ENCODE measurements at regions of chr1 and their contacts with region 1.

Region 1: GRCh38 chr1:93680757-93681550 is 683 bp downstream of the BCAR3 start:
- DNase-seq: peak; percentile 62
- ATAC-seq: peak; percentile 72
- H3K4me3 Mint-ChIP-seq: peak overlapping the region; percentile 99
- H3K27ac Mint-ChIP-seq: peak overlapping the region; percentile 94
- H3K4me1 Mint-ChIP-seq: peaks cover 76% of the 10 kb centered on the region
- H3K27me3 Mint-ChIP-seq: no peaks in the 10 kb centered on the region
- CTCF ChIP-seq: no peak

Region 2: GRCh38 chr1:93215322-93215721 is 465.6 kb before region 1 on chr1:
- CTCF ChIA-PET with region 1: no interaction called
- POLR2A ChIA-PET with region 1: no interaction called
- intact Hi-C with region 1: no loop called
- DNase-seq: no peak
- ATAC-seq: no peak
- H3K4me3 Mint-ChIP-seq: no peak overlapping the region
- H3K27ac Mint-ChIP-seq: no peak overlapping the region
- H3K4me1 Mint-ChIP-seq: peaks cover 15% of the 10 kb centered on the region
- H3K27me3 Mint-ChIP-seq: no peaks in the 10 kb centered on the region
- CTCF ChIP-seq: no peak

Region 3: DNA sequence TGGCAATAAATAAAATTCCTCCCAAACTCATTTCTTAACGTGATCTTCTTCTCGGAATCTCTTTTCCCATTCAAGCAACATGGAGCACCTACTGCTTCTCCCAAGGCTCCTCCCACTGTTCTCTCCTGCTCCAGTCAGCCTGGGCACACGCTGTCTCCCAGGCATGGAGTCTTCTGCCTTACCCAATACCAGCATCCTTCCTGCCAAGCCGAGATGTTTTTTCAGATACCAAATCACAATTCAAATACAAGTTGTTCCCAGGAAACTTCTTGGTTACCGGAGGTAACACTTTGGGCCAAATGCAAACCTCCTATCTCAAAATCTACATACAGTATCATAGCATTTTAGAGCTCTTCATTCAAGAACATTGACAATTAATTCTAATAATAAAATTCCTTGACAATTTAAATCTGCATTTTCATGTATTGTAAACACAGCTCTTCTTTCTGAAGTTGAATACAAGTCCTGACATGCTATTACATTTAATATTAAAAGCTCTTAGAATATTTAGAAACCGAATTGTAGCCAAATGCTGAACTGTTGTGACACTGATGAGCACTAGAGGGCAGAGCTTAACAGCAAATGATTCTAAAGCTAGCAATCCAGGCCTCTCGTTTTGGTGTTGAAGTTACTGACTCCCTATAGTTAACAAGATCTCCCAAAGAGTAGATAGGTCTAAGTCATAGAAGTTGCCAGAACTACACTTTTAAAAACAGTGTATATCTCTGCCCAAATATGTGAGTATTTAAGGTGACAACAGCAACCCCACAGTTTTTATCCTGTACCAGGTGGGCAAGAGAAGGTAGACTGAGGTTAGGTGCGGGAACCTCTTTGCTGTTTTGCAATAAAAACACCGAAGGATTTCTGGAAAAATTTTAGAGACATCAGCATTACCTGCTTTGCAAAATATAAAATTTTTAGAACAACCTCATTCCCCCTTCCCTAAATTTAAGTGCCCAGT is 51.6 kb before region 1 on chr1:
- CTCF ChIA-PET with region 1: interaction called, 49 read pairs
- POLR2A ChIA-PET with region 1: interaction called, 3 read pairs
- intact Hi-C with region 1: loop called (anchors 1 kb)
- DNase-seq: no peak
- ATAC-seq: peak; percentile 83
- H3K4me3 Mint-ChIP-seq: no peak overlapping the region
- H3K27ac Mint-ChIP-seq: no peak overlapping the region
- H3K4me1 Mint-ChIP-seq: peaks cover 9% of the 10 kb centered on the region
- H3K27me3 Mint-ChIP-seq: no peaks in the 10 kb centered on the region
- CTCF ChIP-seq: peak; percentile 74

Region 4: GRCh38 chr1:93692983-93693591 is 12.1 kb after region 1 on chr1:
- CTCF ChIA-PET with region 1: interaction called, 14 read pairs
- POLR2A ChIA-PET with region 1: interaction called, 25 read pairs
- intact Hi-C with region 1: loop called (anchors 1 kb)
- DNase-seq: no peak
- ATAC-seq: peak; percentile 80
- H3K4me3 Mint-ChIP-seq: peak overlapping the region; percentile 64
- H3K27ac Mint-ChIP-seq: no peak overlapping the region
- H3K4me1 Mint-ChIP-seq: peaks cover 16% of the 10 kb centered on the region
- H3K27me3 Mint-ChIP-seq: no peaks in the 10 kb centered on the region
- CTCF ChIP-seq: no peak

Region 5: GRCh38 chr1:93708734-93709481 is 28.0 kb after region 1 on chr1:
- CTCF ChIA-PET with region 1: interaction called, 7 read pairs
- POLR2A ChIA-PET with region 1: interaction called, 34 read pairs
- intact Hi-C with region 1: loop called (anchors 1 kb)
- DNase-seq: no peak
- ATAC-seq: no peak
- H3K4me3 Mint-ChIP-seq: peak overlapping the region; percentile 72
- H3K27ac Mint-ChIP-seq: peak overlapping the region; percentile 90
- H3K4me1 Mint-ChIP-seq: peaks cover 68% of the 10 kb centered on the region
- H3K27me3 Mint-ChIP-seq: no peaks in the 10 kb centered on the region
- CTCF ChIP-seq: no peak

Region 6: DNA sequence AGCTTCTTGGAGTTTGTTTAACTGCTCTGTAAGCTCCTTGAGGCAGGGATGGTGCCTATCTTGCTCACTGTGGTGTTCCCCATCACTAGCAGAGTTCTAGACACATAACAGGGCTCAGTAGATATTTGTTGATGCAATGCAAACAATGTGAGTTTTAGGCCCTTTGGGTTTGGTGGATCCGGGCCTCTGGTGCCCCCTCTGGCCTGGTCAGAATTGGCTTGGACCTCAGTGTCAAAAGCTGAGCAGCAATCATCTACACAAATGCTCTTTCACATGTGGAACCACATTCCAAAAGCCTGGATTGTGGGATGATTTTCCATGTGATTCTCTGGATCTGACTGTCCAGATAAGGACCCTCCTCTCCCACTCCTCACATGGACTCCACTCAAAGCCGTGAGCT is 54.0 kb after region 1 on chr1:
- CTCF ChIA-PET with region 1: interaction called, 5 read pairs
- POLR2A ChIA-PET with region 1: interaction called, 4 read pairs
- intact Hi-C with region 1: loop called (anchors 1 kb)
- DNase-seq: no peak
- ATAC-seq: peak; percentile 28
- H3K4me3 Mint-ChIP-seq: no peak overlapping the region
- H3K27ac Mint-ChIP-seq: no peak overlapping the region
- H3K4me1 Mint-ChIP-seq: peaks cover 14% of the 10 kb centered on the region
- H3K27me3 Mint-ChIP-seq: no peaks in the 10 kb centered on the region
- CTCF ChIP-seq: no peak

Region 7: GRCh38 chr1:93814059-93814794 is 133.3 kb after region 1 on chr1:
- CTCF ChIA-PET with region 1: interaction called, 27 read pairs
- POLR2A ChIA-PET with region 1: interaction called, 5 read pairs
- intact Hi-C with region 1: loop called (anchors 1 kb)
- DNase-seq: no peak
- ATAC-seq: peak; percentile 97
- H3K4me3 Mint-ChIP-seq: no peak overlapping the region
- H3K27ac Mint-ChIP-seq: no peak overlapping the region
- H3K4me1 Mint-ChIP-seq: peaks cover 16% of the 10 kb centered on the region
- H3K27me3 Mint-ChIP-seq: no peaks in the 10 kb centered on the region
- CTCF ChIP-seq: peak; percentile 55

Measured in activated B cell treated with CpG ODN at 0.5 μM for 24 hours (primary cell).